GM23248 (cell line): ENCODE measurements at regions of chr19 and their contacts with region 1.

Region 1: DNA sequence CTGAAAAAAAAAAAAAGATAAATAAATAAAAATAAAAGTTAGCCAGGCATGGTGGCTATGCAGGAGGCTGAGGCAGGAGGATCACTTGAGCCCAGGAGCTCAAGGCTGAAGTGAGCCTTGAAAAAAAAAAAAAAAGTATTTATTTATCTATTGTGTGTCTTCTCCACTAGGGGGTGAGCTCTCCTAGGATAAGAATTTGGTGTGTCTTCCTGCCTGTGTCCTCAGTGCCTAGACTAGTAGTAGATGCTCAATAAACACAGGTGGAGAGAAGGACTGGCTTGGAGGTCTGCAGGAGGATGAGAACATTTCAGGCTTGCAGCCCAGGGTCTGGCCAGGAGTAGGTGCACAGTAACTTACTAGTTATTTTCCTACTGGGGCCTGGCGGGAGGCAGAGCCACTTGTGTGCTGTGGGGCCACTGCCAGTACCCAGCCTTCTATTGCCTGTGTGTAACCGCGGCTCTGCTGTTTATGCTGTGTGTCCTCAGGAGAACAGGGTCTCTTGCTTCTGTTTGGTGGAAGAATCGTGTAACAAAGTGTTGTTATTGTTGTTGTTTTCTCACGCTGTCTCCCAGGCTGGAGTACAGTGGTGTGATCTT is 5.4 kb downstream of the LMTK3 start:
- DNase-seq: peak; percentile 74
- H3K4me3 ChIP-seq: no peak overlapping the region
- H3K27ac ChIP-seq: no peak overlapping the region
- H3K4me1 ChIP-seq: 0 out of 2 replicates have a peak, but pooled peaks cover 3% of the 10 kb centered on the region
- H3K27me3 ChIP-seq: peaks cover 4% of the 10 kb centered on the region

Region 2: GRCh38 chr19:48239580-48240141 is 266.6 kb before region 1 on chr19:
- in situ Hi-C with region 1: no loop called
- DNase-seq: peak; percentile 14
- H3K4me3 ChIP-seq: no peak overlapping the region
- H3K27ac ChIP-seq: no peak overlapping the region
- H3K4me1 ChIP-seq: no peaks in the 10 kb centered on the region
- H3K27me3 ChIP-seq: no peaks in the 10 kb centered on the region

Region 3: GRCh38 chr19:48391107-48391986 is 114.9 kb before region 1 on chr19 and contains the start of gene KDELR1:
- in situ Hi-C with region 1: no loop called
- DNase-seq: peak; percentile 88
- H3K4me3 ChIP-seq: peak within 1 kb of the TSS; percentile 91
- H3K27ac ChIP-seq: peak within 1 kb of the TSS; percentile 90
- H3K4me1 ChIP-seq: no peaks in the 10 kb centered on the region; the same call in 1 of the 2 replicates
- H3K27me3 ChIP-seq: peaks cover 3% of the 10 kb centered on the region; the same call in 1 of the 2 replicates
- total RNA-seq, gene KDELR1: 126 and 170 TPM in 2 replicates

Region 4: DNA sequence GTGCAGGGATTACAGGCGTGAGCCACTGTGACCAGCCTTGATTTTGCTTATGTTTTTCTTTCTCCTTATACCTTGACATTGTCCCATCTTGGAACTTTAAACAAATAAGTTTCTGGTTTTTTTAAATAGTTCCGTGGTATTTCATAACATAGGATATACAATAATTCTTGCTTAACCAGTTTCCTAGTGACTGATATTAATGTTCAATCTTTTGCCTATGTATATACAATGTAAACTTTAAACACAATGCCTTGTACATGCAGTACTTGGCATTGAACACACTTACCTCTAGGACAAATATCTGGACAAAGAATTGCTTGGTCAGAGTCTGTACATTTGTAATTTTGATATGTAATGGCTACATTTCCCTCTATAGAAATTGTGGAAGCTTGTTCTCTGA is 75.9 kb after region 1 on chr19:
- in situ Hi-C with region 1: loop called (anchors 5 kb)
- DNase-seq: no peak
- H3K4me3 ChIP-seq: no peak overlapping the region
- H3K27ac ChIP-seq: no peak overlapping the region
- H3K4me1 ChIP-seq: peaks cover 8% of the 10 kb centered on the region
- H3K27me3 ChIP-seq: no peaks in the 10 kb centered on the region